ENCODE measurements at regions of chr14 and their contacts with region 1.

Region 1: DNA sequence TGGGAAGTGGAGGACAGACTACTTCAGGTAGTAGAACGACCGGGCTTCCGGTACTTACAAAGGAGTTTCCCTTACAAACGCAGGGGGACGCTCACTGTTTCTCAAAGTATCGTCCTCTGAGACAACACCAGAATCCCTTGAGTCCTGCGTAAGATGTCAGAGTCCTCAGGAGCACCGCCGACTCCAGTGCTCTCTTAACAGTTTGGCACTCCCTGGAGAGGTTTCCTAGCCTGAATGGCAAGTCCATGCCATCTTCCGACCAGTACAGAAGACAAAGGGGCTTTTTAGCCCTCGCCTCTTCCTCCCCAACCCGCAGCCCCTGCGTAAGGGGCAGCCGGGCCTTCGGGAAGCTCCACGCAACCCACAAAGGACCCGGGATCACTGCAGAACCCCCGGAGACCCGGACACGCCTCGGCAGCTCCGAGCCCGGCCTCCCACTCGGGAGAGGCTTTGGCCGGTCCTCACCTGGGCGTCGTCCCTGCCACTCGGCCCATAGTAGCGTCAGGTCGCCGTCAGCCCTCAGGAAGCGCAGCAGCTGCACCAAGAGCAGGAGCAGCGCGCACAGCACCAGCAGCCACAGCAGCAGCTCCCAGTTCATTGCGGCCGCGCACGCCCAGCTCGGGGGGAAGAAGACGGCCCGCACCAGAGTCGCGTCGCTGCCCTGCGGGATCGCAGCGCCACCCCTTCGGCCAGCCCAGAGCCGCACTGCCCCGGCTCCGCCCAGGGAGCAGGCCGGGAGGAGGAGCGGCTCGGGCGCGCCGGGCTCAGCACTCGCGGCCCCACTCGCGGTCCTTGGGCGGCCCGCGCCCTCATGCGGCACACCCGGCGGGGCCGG is at the start of gene DHRS7:
- DNase-seq: peak; percentile 95
- total RNA-seq, gene DHRS7: 36.8 TPM

Region 2: DNA sequence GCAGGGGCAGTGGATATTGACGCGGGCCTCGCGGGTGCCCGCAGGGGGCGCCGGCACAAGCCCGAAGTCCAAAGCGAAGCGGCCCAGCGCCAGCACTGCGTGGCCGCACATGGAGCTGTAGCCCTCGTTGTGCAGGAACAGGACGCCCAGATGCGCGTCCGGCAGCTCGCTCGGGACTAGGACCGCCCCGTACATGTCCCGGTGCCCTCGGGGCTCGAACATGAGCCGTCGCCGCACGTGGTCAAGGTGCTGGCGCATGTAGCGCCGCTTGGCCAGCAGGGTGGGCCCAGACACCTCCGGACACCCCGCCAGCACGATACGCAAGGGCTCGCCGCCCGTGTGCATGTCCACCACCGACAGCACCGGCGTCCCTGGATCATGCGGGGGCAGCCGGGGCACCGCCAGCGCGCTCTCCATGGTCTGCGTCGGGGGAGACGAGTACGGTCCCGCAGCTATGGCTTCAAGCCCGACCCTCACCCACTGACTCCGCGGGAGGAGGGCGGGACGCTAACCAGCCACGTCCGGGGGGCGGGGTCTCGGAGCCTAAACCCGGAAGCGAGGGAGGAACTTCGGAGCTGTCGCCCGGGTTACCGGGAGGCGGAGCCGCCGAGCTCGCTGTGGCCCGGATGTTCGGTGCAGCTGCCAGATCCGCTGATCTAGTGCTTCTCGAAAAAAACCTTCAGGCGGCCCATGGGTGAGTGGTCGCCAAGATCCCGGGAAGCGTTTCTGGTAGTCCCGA is 680.9 kb before region 1 on chr14 and contains the starts of genes JKAMP and L3HYPDH:
- intact Hi-C with region 1: loop called (anchors 10 kb)
- DNase-seq: peak; percentile 100
- total RNA-seq, gene JKAMP: 21.1 TPM
- total RNA-seq, gene L3HYPDH: 20.3 TPM

Region 3: GRCh38 chr14:59964251-59965007 is 200.5 kb before region 1 on chr14:
- intact Hi-C with region 1: loop called (anchors 2 kb)
- DNase-seq: no peak

Region 4: GRCh38 chr14:60064491-60065072 is 100.3 kb before region 1 on chr14:
- intact Hi-C with region 1: loop called (anchors 5 kb)
- DNase-seq: no peak

Region 5: GRCh38 chr14:60091550-60092530 is 73.1 kb before region 1 on chr14 and contains the start of gene PCNX4:
- intact Hi-C with region 1: loop called (anchors 2 kb)
- DNase-seq: peak; percentile 99
- total RNA-seq, gene PCNX4: 44.2 TPM

Region 6: DNA sequence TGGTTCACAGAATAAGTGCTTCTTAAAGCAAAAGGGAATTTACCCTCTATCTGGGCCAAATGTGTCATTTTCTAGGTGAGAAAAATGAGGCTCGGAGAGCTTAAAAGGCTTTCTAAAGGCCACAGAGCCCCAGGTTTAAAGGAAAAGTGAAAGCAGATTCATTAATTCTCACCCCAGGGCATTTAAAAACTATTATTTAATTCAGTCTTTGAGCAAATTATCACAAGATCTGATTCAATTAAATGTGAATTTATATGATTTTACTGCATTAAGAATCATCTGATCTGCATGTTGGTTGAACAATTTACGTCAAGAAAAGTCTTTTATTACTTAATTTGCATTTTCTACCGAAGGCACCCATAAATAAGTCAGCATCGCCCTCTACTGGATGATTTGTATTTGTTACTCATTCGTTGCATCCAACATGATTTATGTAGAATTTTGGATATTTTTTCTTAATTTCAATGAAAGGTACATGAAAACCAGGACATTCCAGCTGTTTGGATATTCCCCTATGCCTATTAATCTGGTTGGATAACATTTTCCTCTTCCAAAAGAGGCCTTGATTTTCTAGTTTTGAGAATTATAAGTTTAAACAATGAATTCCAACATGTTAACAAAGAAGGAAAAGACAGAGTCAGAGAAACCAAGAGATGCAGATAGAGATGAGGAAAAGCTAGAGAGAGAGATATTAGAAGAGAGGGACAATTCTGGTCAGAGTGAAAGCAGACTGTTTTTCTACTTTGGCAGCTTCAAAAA is 19.4 kb after region 1 on chr14:
- intact Hi-C with region 1: no loop called
- DNase-seq: no peak

Region 7: DNA sequence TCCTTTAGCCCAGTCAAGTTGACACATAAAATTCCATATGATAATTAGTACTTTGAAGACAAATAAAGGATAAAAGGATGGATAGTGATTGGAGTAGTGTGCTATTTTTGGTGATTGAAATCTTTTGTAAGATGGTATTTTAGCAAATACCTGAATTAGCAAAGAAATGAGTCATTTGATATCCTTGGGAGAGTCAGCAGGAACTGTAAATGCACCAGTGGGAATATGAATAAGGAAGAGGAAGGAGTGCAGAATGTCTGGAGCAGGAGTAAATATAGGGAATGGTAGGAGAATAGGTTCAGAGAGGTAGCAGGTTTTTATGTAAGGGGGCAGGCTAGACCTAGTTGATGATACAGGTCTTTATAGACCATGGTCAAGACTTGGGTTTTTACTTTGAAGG is 741.0 kb after region 1 on chr14:
- intact Hi-C with region 1: no loop called
- DNase-seq: no peak